ENCODE measurements at regions of chr9 and their contacts with region 1.

Region 1: DNA sequence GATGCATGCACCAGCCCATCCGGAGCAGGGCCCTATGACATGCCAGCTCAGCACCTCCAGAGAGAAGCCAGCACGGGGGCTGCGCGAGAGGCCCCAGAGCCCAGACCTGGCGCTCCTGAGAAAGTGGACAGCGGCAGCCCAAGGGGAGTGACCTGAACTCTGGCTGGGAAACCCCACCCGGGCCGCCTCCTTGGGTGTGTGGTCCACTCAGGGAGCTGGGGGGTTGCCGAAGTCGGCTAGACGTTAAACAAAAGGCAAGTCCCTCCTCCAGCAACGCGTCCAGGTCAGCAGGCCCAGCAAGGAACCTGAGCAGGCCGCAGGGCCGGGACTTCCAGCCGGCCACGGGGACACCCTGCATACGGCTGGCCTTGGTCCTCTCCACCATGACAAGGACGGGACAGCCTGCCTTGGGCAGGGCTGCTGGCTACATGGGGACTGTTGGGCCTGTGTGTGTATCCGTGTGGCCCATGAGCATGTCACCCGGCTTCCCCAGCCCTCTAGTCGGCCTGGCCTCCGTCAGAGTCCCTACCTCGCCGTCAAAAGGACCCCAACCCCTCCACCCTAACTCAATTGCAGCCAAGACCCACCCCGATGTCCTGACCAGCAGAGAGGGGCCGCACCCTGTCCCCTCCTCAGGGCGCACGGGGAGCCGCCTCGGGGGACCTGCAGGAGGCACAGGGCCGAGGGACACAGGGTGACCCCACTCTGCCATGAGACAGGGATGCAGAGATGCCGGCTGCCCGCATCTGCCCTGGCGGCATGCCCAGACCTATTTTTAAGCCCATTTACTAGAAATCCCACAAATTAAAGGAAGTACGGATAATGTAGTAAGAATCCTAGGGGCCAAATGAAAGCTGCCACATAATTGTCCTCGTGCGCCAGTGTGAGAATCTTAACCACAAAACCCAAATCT is 35.5 kb downstream of the NACC2 start:
- DNase-seq: no peak
- ATAC-seq: peak in 1 of 2 experiments; percentile 8; a peak in 2 of 6 replicates
- H3K4me3 ChIP-seq: no peak overlapping the region
- H3K27ac ChIP-seq: no peak overlapping the region
- H3K4me1 ChIP-seq: peaks cover 39% of the 10 kb centered on the region
- CTCF ChIP-seq: no peak
- EP300 ChIP-seq: no peak
- POLR2A ChIP-seq: no peak
- RAD21 ChIP-seq: no peak

Region 2: GRCh38 chr9:135961277-135961705 is 98.3 kb before region 1 on chr9 and contains the start of gene UBAC1:
- CTCF ChIA-PET with region 1: interaction called, 44 read pairs
- POLR2A ChIA-PET with region 1: no interaction called
- DNase-seq: peak; percentile 95 to 99
- ATAC-seq: peak; percentile 92 to 93
- H3K4me3 ChIP-seq: peak within 1 kb of the TSS; percentile 87
- H3K27ac ChIP-seq: peak within 1 kb of the TSS; percentile 86 to 93
- H3K4me1 ChIP-seq: peaks cover 12% of the 10 kb centered on the region; the same call in 2 of the 3 replicates
- CTCF ChIP-seq: peak; percentile 29
- EP300 ChIP-seq: no peak
- POLR2A ChIP-seq: peak; percentile 30; the same call in 1 of the 2 replicates
- RAD21 ChIP-seq: no peak
- polyA plus RNA-seq, gene UBAC1: 31.5 and 37.6 TPM in 2 replicates

Measured in A549 (cell line).